Uterus (tissue), 4 donors: ENCODE measurements at regions of chr19 and their contacts with region 1.

Region 1: GRCh38 chr19:45643024-45643926 is 4.1 kb upstream of the EML2 start:
- DNase-seq: peak; percentile 68 to 76
- H3K4me3 ChIP-seq: no peak overlapping the region
- H3K27ac ChIP-seq: no peak overlapping the region
- H3K4me1 ChIP-seq: peaks cover 0 to 8% of the 10 kb centered on the region in 2 donors
- H3K27me3 ChIP-seq: peaks cover 0 to 6% of the 10 kb centered on the region in 2 donors
- CTCF ChIP-seq: peak; percentile 89 to 96 (median 92)
- POLR2A ChIP-seq: no peak

Region 2: GRCh38 chr19:45523642-45524256 is 119.5 kb before region 1 on chr19:
- intact Hi-C with region 1: loop called (anchors 5 kb)
- DNase-seq: peak; percentile 78 to 84
- H3K4me3 ChIP-seq: no peak overlapping the region
- H3K27ac ChIP-seq: no peak overlapping the region
- H3K4me1 ChIP-seq: peaks cover 0 to under 1% of the 10 kb centered on the region in 2 donors
- H3K27me3 ChIP-seq: no peaks in the 10 kb centered on the region
- CTCF ChIP-seq: peak; percentile 89 to 97 (median 91)
- POLR2A ChIP-seq: no peak

Region 3: GRCh38 chr19:45601524-45602374 is 41.5 kb before region 1 on chr19 and contains the start of gene GPR4:
- intact Hi-C with region 1: loop called (anchors 5 kb)
- DNase-seq: no peak
- H3K4me3 ChIP-seq: peak within 1 kb of the TSS; percentile 27 to 33
- H3K27ac ChIP-seq: peak within 1 kb of the TSS; percentile 45 to 65
- H3K4me1 ChIP-seq: no peaks in the 10 kb centered on the region
- H3K27me3 ChIP-seq: peaks cover 5 to 21% of the 10 kb centered on the region in 2 donors
- CTCF ChIP-seq: no peak
- POLR2A ChIP-seq: peak in 1 of 2 donors; percentile 17
- total RNA-seq, gene GPR4: 0.62 to 13.5 (median 6.6) TPM

Region 4: DNA sequence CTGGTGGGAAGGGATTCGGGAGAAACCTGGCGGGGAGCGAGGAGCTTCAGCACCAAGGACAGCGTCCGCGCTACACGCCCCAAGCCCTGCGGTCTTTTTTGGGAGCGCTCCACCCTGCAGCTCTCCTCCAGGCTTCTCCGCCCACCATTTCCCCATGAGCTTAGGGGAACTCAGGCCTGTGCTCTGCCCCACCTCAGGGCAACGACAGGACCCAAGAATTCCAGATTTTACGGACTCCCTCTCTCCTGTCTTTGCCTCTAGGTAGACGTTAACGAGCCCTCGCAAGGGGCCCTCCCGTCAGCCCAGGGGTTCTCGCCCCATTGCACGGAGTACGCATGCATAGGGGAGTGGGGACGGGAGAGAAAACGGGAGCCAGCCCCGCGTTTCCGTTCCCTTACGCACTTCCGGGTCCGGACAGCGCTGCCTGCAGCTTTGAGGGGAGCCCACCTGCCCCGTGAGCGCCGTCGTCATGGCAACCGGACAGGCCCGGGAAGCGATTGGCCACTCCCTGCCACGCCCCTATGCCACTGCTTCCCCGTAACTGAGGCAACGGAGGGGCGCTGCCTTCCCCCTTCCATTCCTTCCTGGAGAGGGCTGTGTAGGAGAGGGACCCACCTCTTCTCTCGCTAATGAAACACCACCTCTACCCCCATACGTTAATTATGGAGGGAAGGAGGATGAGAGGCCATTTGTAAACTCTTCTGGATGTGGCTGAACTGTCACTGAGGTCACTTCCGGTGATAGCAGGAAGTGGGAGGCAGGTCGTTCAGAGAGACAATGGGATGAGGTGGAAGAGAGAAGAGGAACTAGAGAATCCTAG is 309.6 kb after region 1 on chr19:
- intact Hi-C with region 1: no loop called
- DNase-seq: peak in 1 of 2 donors; percentile 36
- H3K4me3 ChIP-seq: no peak overlapping the region
- H3K27ac ChIP-seq: no peak overlapping the region
- H3K4me1 ChIP-seq: no peaks in the 10 kb centered on the region
- H3K27me3 ChIP-seq: no peaks in the 10 kb centered on the region
- CTCF ChIP-seq: no peak
- POLR2A ChIP-seq: no peak